ENCODE measurements at regions of chr1 and their contacts with region 1.

Region 1: DNA sequence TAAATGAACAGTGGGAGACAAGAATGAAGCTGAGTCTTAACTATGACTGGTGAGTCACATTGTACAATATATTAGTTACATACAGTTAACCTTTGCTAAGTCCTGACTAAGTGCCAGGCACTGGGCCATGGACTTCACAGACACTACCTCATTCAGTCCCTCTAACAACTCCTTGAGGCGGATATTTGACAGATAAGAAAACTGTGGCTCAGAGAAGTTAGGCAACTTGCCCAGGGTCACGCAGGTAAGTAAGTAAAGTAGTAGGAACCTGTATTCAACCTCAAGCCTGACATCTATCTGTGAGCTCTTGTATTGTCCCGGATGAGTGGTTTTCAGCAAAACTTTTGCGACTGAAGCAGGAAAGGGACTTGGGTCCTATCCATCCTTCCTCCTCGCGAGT is 62.1 kb downstream of the GNG12 start:
- DNase-seq: peak in 1 of 2 donors; percentile 22
- H3K4me3 ChIP-seq: no peak overlapping the region
- H3K27ac ChIP-seq: no peak overlapping the region
- H3K4me1 ChIP-seq: peaks cover 0 to 15% of the 10 kb centered on the region in 2 donors
- H3K27me3 ChIP-seq: no peaks in the 10 kb centered on the region
- CTCF ChIP-seq: peak in 2 of 6 experiments; percentile 4 to 16
- POLR2A ChIP-seq: no peak

Region 2: GRCh38 chr1:67479146-67479891 is 291.8 kb before region 1 on chr1:
- intact Hi-C with region 1: no loop called
- DNase-seq: peak; percentile 70 to 71
- H3K4me3 ChIP-seq: no peak overlapping the region
- H3K27ac ChIP-seq: no peak overlapping the region
- H3K4me1 ChIP-seq: peaks cover 9 to 14% of the 10 kb centered on the region in 2 donors
- H3K27me3 ChIP-seq: no peaks in the 10 kb centered on the region
- CTCF ChIP-seq: no peak
- POLR2A ChIP-seq: no peak

Region 3: DNA sequence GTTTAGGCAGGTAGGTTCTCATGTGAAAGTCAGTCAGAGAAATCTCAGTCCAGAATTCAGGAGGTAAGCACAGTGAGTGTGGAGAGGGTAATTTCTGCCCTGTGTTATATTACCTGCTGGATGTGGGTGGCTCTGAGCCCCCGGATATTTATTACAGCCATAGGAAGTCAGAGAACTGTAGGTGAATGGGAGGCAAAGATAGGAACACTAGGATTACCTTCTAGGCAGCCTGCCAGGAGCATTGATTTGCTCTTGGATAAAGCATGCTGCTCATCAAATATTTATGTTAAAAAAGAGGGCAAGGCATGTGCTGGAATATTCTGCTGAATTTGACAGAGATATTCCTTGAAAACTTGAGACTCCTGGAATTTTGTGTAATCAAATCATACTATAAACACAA is 53.6 kb after region 1 on chr1:
- intact Hi-C with region 1: loop called (anchors 10 kb)
- DNase-seq: no peak
- H3K4me3 ChIP-seq: no peak overlapping the region
- H3K27ac ChIP-seq: no peak overlapping the region
- H3K4me1 ChIP-seq: peaks cover 4 to 9% of the 10 kb centered on the region in 2 donors
- H3K27me3 ChIP-seq: no peaks in the 10 kb centered on the region
- CTCF ChIP-seq: no peak
- POLR2A ChIP-seq: no peak

Measured in thyroid gland (tissue), 4 donors.